Activated T-helper 2 cell treated with anti-CD3 and anti-CD28 coated beads, Interferon-gamma antibody, Interleukin-2, Interleukin-4, amounts not matched to agents 10 μg/mL and 5 μg/mL and 100 μg/mL, durations not matched to agents 14 hours and 24 hours and 36 hours (primary cell): ENCODE measurements at regions of chr11 and their contacts with region 1.

Region 1: GRCh38 chr11:111378861-111379601 is at the start of gene POU2AF1:
- DNase-seq: peak; percentile 68
- H3K4me3 Mint-ChIP-seq: peak within 1 kb of the TSS; percentile 80
- H3K27ac Mint-ChIP-seq: peak within 1 kb of the TSS; percentile 98
- H3K4me1 Mint-ChIP-seq: peaks cover 73% of the 10 kb centered on the region
- H3K27me3 Mint-ChIP-seq: no peaks in the 10 kb centered on the region
- total RNA-seq, gene POU2AF1: 35.2 and 37.2 TPM in 2 replicates

Region 2: DNA sequence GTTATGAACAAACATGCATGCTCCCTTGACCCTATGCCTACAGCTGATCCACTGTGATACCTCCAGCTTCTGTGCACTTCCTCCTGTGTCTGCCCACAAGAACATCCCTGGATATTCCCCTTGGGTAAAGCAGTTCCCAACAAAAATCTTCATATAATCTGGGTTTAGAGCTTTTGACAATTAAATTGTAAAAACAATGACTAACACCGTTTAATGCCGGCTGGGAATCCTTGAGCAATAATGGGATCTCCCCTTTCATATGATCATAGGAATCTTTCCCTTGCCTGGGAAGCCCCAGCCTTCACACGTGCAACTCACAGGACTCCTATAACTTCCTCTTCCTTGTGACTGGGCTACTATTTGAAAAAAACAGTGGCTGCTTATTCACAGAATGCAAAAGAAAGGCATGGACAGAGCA is 1292.1 kb before region 1 on chr11:
- intact Hi-C with region 1: loop called (anchors 5 kb)
- DNase-seq: no peak
- H3K4me3 Mint-ChIP-seq: no peak overlapping the region
- H3K27ac Mint-ChIP-seq: no peak overlapping the region
- H3K4me1 Mint-ChIP-seq: peaks cover 34% of the 10 kb centered on the region
- H3K27me3 Mint-ChIP-seq: peaks cover 11% of the 10 kb centered on the region

Region 3: DNA sequence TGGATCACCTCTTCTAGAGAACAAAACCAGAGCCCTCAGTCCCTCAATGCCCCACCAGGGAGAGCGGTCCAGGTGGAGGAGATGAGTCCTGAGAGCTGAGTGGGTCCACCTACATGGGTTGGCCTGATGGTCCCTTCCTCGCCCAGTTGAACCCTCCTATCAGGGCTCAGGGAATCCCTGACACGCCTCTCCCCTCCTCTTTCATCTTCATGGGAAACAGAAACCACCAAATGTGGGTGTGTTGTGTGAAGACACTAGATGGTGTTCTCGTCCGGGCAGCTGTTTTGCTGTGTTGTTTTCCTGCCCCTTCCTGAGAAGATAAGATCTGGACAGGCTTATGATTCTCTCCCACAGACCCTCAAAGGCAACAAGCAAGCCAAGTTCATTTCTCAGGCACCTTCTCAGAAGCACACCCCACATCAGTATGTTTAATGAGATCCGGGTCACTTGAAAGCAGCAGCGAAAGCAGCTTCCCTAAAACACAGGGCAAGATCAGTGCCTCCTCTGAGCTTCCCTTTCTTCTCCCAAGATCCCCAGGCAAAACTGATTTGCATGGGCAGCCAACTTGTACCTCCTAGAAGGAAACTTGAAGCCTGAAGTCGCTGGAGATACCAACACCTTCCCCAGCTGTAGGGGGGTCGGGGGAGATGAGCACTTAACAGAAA is 35.4 kb after region 1 on chr11:
- intact Hi-C with region 1: loop called (anchors 1 kb)
- DNase-seq: no peak
- H3K4me3 Mint-ChIP-seq: peak overlapping the region; percentile 28
- H3K27ac Mint-ChIP-seq: peak overlapping the region; percentile 88
- H3K4me1 Mint-ChIP-seq: peaks cover 68% of the 10 kb centered on the region
- H3K27me3 Mint-ChIP-seq: no peaks in the 10 kb centered on the region

Region 4: DNA sequence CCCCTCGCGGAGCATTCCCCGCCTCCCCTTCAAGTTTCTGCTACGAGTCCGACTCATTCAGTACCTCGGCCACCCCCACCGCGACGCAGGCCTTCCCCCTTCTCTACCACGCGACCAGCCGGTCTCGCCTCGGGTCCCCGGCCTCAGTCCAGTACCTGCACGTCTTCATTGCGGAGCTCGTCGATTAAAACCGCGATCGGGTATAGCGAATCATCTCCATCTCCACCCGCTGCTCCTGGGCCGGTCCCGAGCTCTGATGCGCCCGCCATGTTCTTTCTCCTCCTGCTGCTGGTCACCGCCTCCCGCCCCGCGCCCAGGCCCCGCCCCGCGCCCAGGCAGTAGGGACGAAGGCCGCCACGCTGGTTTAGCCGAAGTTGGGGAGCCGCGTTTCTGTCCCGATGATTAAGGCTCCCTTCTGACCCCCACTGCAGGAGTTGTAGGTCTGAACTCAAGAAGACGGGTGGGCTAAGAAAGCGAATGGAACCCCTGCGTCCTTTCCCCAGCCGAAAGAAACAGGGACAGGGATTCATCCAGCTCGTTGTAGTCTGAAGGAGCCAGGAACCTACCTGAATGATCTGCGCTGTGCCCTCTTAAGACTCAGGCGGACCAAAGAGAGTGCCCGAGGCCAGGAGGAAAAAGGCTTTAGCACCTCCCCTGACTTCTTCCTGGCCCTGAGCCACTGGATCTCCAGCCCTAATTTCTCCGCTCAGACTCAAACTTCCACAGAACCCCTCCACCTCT is 387.2 kb after region 1 on chr11 and contains the start of gene PPP2R1B:
- intact Hi-C with region 1: loop called (anchors 10 kb)
- DNase-seq: peak; percentile 66
- H3K4me3 Mint-ChIP-seq: peak within 1 kb of the TSS; percentile 98
- H3K27ac Mint-ChIP-seq: peak within 1 kb of the TSS; percentile 98
- H3K4me1 Mint-ChIP-seq: peaks cover 26% of the 10 kb centered on the region
- H3K27me3 Mint-ChIP-seq: no peaks in the 10 kb centered on the region
- total RNA-seq, gene PPP2R1B: 57.7 and 64.2 TPM in 2 replicates